ENCODE measurements at regions of chr7 and their contacts with region 1.

Region 1: GRCh38 chr7:42911454-42912447 is at the start of gene C7orf25:
- DNase-seq: peak; percentile 97
- H3K4me3 Mint-ChIP-seq: peak within 1 kb of the TSS; percentile 88
- H3K27ac Mint-ChIP-seq: peak within 1 kb of the TSS; percentile 90
- H3K4me1 Mint-ChIP-seq: peaks cover 60% of the 10 kb centered on the region
- H3K27me3 Mint-ChIP-seq: no peaks in the 10 kb centered on the region
- total RNA-seq, gene C7orf25: 0.93 to 2.0 TPM

Region 2: DNA sequence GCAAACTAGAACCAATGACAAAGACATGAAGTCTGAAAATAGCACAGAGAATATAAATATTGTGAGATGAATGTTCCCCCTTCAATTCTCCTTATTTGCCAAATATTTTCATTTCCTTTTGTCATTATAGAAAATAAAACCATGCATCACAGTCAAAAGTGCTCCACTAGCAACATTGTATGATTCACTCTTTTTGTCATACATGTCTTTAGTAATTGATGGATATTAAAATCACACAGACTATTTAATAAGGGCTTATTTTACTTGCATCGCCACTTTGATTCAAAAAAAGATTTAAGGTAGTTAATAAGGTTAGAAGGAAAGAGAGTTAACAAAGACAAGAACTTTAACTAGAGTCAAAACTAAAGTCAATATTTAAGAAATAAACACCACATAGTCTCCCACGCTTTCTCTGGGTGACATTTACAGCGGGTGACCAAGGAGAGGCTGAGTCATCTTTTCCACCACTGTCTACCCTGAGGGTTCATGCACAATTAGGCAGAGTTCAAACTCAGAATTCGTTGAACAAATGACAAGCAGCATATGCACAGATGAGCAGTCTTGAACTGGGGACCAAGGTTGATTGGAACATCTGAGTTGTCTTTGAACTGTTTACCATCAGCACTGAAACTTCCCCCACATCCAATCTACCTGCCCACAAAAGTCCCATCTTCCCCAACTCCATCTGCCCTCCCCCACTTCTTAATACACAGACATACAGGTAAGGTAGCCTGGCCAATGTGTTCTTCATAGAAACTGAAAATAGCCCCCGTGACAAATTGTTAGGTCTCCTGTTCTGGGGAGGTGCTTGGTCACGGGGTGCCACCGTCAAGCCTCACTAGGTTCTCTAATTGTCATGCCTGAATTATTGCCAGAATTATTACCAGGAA is 42.4 kb before region 1 on chr7:
- CTCF ChIA-PET with region 1: no interaction called
- intact Hi-C with region 1: loop called (anchors 1 kb)
- DNase-seq: peak; percentile 63
- H3K4me3 Mint-ChIP-seq: no peak overlapping the region
- H3K27ac Mint-ChIP-seq: peak overlapping the region; percentile 68
- H3K4me1 Mint-ChIP-seq: peaks cover 16% of the 10 kb centered on the region
- H3K27me3 Mint-ChIP-seq: peaks cover 10% of the 10 kb centered on the region

Region 3: DNA sequence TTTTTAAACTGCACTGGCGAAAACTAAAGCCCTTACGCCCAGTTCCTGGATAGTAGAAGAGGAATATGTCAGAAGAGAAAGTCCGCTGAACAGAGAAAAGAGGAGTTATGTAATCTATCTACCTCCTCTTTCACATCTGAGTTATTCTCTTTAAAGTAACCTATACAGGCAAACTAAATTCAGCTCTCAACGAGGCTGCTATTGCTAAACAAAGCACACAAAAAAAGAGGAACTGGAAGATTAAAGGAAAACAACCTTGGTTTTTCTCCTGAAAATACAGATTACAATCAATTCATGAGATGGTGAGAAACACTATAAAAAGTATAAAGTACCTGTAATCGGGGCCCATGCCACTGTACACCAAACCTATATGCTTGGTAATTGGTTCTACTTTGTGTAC is 14.5 kb after region 1 on chr7:
- CTCF ChIA-PET with region 1: interaction called, 6 read pairs
- intact Hi-C with region 1: loop called (anchors 1 kb)
- DNase-seq: no peak
- H3K4me3 Mint-ChIP-seq: no peak overlapping the region
- H3K27ac Mint-ChIP-seq: no peak overlapping the region
- H3K4me1 Mint-ChIP-seq: peaks cover 69% of the 10 kb centered on the region
- H3K27me3 Mint-ChIP-seq: no peaks in the 10 kb centered on the region

Region 4: GRCh38 chr7:43071604-43072003 is 159.9 kb after region 1 on chr7:
- CTCF ChIA-PET with region 1: no interaction called
- intact Hi-C with region 1: loop called (anchors 1 kb)
- DNase-seq: peak; percentile 47
- H3K4me3 Mint-ChIP-seq: no peak overlapping the region
- H3K27ac Mint-ChIP-seq: no peak overlapping the region
- H3K4me1 Mint-ChIP-seq: peaks cover 6% of the 10 kb centered on the region
- H3K27me3 Mint-ChIP-seq: peaks cover 26% of the 10 kb centered on the region

Region 5: GRCh38 chr7:43735802-43736541 is 824.2 kb after region 1 on chr7:
- CTCF ChIA-PET with region 1: no interaction called
- intact Hi-C with region 1: loop called (anchors 5 kb)
- DNase-seq: peak; percentile 86
- H3K4me3 Mint-ChIP-seq: no peak overlapping the region
- H3K27ac Mint-ChIP-seq: peak overlapping the region; percentile 75
- H3K4me1 Mint-ChIP-seq: peaks cover 22% of the 10 kb centered on the region
- H3K27me3 Mint-ChIP-seq: peaks cover 7% of the 10 kb centered on the region